ENCODE measurements at regions of chr3 and their contacts with region 1.

Region 1: GRCh38 chr3:13884851-13885703 is 5.2 kb upstream of the WNT7A start:
- DNase-seq: peak; percentile 72
- ATAC-seq: peak; percentile 81
- H3K4me3 Mint-ChIP-seq: no peak overlapping the region
- H3K27ac Mint-ChIP-seq: no peak overlapping the region
- H3K4me1 Mint-ChIP-seq: peaks cover 2% of the 10 kb centered on the region
- H3K27me3 Mint-ChIP-seq: peaks cover 42% of the 10 kb centered on the region

Region 2: DNA sequence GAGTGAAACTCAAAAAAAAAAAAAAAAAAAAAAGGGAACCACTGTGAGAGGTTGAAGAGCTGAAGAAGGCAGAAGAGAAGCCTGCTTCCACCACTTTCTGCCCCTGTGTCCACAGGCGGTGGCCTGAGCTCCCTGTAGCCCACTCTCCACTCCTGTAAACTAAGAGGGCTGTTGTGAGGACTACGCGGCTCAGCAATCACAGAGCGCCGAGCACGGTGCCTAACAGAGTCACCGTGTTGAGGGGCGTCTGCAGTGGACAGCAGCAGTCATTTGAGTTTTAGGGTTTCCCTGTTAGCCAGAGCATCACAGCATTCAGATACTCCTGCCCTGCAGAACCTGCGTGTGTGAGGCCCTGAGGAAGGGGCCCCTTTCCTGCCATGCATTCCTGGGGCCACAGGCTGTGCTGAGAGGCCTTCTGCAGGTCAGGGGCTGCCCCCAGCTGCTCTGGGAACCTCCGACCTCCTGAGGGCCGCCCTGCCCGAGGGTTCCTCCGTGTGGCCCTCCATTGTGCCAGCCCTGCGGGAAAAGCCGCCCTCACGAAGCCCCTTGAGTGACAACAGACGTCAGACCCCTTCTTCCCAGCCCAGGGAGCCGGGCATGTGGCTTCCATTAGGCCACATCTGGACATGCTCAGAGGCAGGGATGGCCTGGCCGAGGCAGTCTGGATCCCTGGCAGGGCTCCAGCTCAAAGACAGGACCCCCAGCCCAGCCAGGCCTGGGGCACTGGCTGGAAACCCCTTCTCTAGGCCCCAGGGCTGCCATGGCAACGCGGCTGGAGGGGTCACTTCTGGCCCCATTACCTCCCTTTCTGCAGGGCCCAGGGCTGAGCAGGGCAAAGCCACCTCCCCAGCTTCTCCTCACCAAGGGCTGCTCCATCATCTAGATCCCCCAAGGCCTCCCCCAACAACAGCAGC is 310.9 kb before region 1 on chr3:
- CTCF ChIA-PET with region 1: no interaction called
- DNase-seq: no peak
- ATAC-seq: no peak
- H3K4me3 Mint-ChIP-seq: no peak overlapping the region
- H3K27ac Mint-ChIP-seq: no peak overlapping the region
- H3K4me1 Mint-ChIP-seq: no peaks in the 10 kb centered on the region
- H3K27me3 Mint-ChIP-seq: peaks cover 3% of the 10 kb centered on the region

Region 3: GRCh38 chr3:13869761-13870343 is 15.2 kb before region 1 on chr3:
- CTCF ChIA-PET with region 1: interaction called, 11 read pairs
- DNase-seq: no peak
- ATAC-seq: no peak
- H3K4me3 Mint-ChIP-seq: no peak overlapping the region
- H3K27ac Mint-ChIP-seq: no peak overlapping the region
- H3K4me1 Mint-ChIP-seq: peaks cover 17% of the 10 kb centered on the region
- H3K27me3 Mint-ChIP-seq: peaks cover 3% of the 10 kb centered on the region

Region 4: DNA sequence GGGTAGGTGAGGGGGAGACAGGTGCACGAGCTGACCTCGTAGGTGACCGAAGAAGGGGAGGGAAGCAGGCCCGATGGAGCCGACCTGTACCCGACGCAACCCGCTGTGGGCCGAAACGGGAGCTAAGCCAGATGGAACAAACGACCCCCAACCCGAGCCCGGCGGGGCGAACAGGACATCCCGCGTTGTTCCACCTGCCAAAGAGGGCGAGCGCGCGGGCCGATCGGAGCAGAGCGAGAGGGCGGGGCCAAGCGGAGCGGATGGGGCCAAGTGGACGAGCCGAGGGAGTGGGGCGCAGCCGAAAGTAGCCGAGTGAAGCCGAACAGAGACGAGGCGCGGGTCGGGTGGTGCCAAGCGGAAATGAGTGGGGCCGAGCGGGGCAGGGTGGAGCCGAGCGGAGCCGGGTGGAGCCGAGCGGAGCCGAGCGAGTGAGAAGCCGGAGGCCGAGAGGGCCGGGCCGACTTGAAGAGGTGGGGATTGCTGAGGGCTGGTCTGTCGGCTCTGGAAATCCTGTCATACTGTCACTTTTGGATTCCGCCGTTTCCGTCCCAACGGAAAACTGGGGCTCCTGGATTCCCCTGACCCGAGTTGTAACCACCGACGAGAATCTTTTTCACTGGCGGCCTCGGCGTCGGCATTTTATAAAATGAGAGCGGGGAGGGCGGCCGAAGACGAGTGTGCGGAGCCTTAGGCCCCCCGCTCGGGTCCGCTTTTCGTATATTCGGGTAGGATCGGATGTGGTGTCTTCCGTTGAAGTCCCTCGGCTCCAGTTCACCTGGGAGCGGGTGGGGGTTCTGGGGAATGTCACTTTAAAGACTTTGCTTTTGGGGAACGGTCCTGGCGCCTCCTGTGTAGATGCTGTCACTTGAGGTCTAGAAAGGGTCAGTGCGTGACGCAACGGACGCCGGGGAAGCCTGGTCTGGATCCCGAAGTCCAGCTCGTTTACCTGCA is 10.4 kb after region 1 on chr3:
- CTCF ChIA-PET with region 1: interaction called, 18 read pairs
- DNase-seq: peak; percentile 98
- ATAC-seq: peak; percentile 99
- H3K4me3 Mint-ChIP-seq: peak overlapping the region; percentile 79
- H3K27ac Mint-ChIP-seq: peak overlapping the region; percentile 81
- H3K4me1 Mint-ChIP-seq: peaks cover 24% of the 10 kb centered on the region
- H3K27me3 Mint-ChIP-seq: no peaks in the 10 kb centered on the region

Region 5: GRCh38 chr3:13963140-13963898 is 78.2 kb after region 1 on chr3:
- CTCF ChIA-PET with region 1: no interaction called
- DNase-seq: no peak
- ATAC-seq: no peak
- H3K4me3 Mint-ChIP-seq: no peak overlapping the region
- H3K27ac Mint-ChIP-seq: no peak overlapping the region
- H3K4me1 Mint-ChIP-seq: peaks cover 4% of the 10 kb centered on the region
- H3K27me3 Mint-ChIP-seq: peaks cover 12% of the 10 kb centered on the region

Measured in activated CD8-positive, alpha-beta memory T cell treated with anti-CD3 and anti-CD28 coated beads, Interleukin-2, amount 10 ng/mL, durations not matched to agents 7 days and 5 days (primary cell).